PC-9 (cell line): ENCODE measurements at regions of chr22 and their contacts with region 1.

Region 1: GRCh38 chr22:17672417-17672991 is 33.9 kb downstream of the BCL2L13 start:
- DNase-seq: no peak
- H3K4me3 ChIP-seq: no peak overlapping the region
- H3K27ac ChIP-seq: peak overlapping the region; percentile 40
- H3K4me1 ChIP-seq: peaks cover 8% of the 10 kb centered on the region
- H3K27me3 ChIP-seq: no peaks in the 10 kb centered on the region
- CTCF ChIP-seq: no peak

Region 2: DNA sequence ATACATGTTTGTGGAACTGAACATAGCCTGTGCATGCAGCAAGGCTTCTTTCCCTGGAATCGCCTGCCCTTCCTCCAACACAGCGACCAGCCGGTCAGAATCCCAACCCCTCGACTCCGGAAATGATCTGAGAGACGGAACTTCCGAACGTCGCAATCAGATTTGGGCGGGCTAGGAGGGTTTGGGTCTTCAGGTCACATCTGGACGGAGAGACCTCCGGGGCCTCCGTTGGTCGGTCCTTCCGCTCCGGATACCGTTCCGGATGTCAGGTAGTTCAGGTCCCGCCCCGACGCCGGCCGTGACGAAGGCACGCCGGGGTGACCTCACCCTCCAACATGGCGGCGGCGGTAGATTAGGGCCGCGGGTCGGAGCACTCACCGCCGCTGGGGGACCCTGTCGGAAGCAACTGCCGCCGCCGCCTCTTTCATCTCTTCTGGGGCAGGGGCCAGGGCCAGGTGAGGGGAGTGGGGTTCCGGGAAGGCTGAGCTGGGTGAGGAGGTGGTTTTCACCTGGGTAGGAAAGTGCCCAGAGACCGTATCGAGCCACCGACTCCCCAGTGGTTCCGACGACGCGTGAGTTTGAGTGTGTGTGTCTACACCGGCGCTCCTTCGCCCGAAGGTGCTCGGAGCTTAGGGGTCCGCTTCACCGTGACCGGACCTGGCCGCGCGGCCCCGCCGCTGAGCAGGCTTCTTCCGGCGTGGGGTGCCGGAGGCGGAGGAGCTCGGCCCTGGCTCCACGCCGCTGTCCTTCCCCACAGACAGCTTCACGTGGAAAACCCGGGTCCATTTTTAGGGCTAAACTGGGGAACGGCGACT is 33.9 kb before region 1 on chr22 and contains the start of gene BCL2L13:
- CTCF ChIA-PET with region 1: no interaction called
- POLR2A ChIA-PET with region 1: interaction called, 40 read pairs
- intact Hi-C with region 1: no loop called
- DNase-seq: peak; percentile 74 to 79
- H3K4me3 ChIP-seq: peak within 1 kb of the TSS; percentile 89
- H3K27ac ChIP-seq: peak within 1 kb of the TSS; percentile 90
- H3K4me1 ChIP-seq: peaks cover 30% of the 10 kb centered on the region
- H3K27me3 ChIP-seq: no peaks in the 10 kb centered on the region
- CTCF ChIP-seq: no peak; the same call in 1 of the 2 replicates
- total RNA-seq, gene BCL2L13: 43.1 and 46.3 TPM in 2 replicates

Region 3: GRCh38 chr22:17655289-17655688 is 17.2 kb before region 1 on chr22:
- CTCF ChIA-PET with region 1: no interaction called
- POLR2A ChIA-PET with region 1: interaction called, 15 read pairs
- intact Hi-C with region 1: no loop called
- DNase-seq: no peak
- H3K4me3 ChIP-seq: no peak overlapping the region
- H3K27ac ChIP-seq: no peak overlapping the region
- H3K4me1 ChIP-seq: no peaks in the 10 kb centered on the region
- H3K27me3 ChIP-seq: no peaks in the 10 kb centered on the region
- CTCF ChIP-seq: no peak